ENCODE measurements at regions of chr5 and their contacts with region 1.

Region 1: DNA sequence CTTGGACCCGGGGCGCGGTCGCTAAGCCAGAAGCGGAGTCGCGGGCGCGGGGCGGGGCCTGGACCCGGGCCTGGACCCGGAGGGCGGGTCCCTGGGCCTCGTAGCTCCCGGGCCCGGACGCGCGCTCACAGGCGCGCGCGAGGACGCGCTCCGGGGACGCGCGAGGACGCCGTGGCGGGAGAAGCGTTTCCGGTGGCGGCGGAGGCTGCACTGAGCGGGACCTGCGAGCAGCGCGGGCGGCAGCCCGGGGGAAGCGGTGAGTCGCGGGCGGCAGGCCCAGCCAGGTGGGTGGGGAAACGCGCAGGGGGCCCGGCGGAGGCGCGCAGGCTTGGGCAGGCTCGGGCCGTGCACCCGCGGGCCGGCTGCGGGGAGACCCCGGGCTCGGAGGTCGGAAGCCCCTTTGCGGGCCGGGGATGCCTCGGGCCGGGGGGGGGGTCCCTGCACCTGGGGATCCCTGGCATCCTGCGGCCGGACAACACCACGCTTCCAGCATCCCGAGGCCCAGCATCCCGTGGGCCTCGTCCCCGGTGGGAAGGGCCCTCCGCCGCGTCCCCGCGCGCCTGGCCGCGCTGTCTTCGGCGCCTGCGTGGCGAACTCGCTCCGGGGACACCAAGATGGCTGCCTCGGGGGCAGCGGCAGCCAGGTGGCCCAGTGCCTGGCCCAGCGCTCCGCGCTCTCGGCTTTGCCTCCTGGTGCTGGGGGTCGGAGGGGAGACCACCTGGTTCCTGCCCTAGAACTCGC is at the start of gene SFXN1:
- DNase-seq: peak; percentile 80 to 83
- ATAC-seq: peak; percentile 91 to 96 (median 93)
- H3K4me3 ChIP-seq: peak within 1 kb of the TSS; percentile 82
- H3K27ac ChIP-seq: peak within 1 kb of the TSS; percentile 78
- H3K4me1 ChIP-seq: no peaks in the 10 kb centered on the region
- H3K27me3 ChIP-seq: no peaks in the 10 kb centered on the region
- CTCF ChIP-seq: no peak
- total RNA-seq, gene SFXN1: 8.6 to 25.0 (median 13.7) TPM

Region 2: GRCh38 chr5:176908675-176909368 is 1430.3 kb after region 1 on chr5:
- intact Hi-C with region 1: loop called in 1 of 2 experiments (anchors 5 kb)
- DNase-seq: no peak
- ATAC-seq: no peak
- H3K4me3 ChIP-seq: no peak overlapping the region
- H3K27ac ChIP-seq: no peak overlapping the region
- H3K4me1 ChIP-seq: no peaks in the 10 kb centered on the region
- H3K27me3 ChIP-seq: no peaks in the 10 kb centered on the region
- CTCF ChIP-seq: no peak